ENCODE measurements at regions of chr15 and their contacts with region 1.

Region 1: DNA sequence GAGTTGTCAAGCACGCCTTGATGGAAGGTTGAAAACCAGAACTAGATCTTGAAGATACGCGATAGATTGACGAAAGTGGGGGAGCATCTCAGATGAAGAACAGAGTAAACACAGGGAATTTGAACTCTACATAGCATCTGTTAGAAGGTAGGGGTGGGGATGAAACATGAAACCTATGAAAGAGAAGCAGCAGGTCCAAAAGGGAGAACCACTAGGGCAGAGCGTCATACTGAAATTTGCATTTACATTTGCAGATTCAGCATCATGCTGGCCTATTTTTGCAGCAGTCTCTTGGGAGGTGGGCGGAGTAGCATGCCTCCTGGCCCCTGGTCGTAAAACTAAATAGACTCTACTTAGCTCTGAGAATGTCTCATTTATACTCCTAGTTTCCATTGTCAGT is 46.1 kb upstream of the RASGRP1 start:
- DNase-seq: peak; percentile 84
- ATAC-seq: peak; percentile 64
- H3K4me3 Mint-ChIP-seq: peak overlapping the region; percentile 5
- H3K27ac Mint-ChIP-seq: peak overlapping the region; percentile 89
- H3K4me1 Mint-ChIP-seq: peaks cover 73% of the 10 kb centered on the region
- H3K27me3 Mint-ChIP-seq: no peaks in the 10 kb centered on the region
- CTCF ChIP-seq: no peak

Region 2: GRCh38 chr15:38554354-38554753 is 56.4 kb before region 1 on chr15:
- CTCF ChIA-PET with region 1: interaction called, 4 read pairs
- POLR2A ChIA-PET with region 1: interaction called, 90 read pairs
- intact Hi-C with region 1: no loop called
- DNase-seq: peak; percentile 67
- ATAC-seq: peak; percentile 73
- H3K4me3 Mint-ChIP-seq: peak overlapping the region; percentile 54
- H3K27ac Mint-ChIP-seq: peak overlapping the region; percentile 96
- H3K4me1 Mint-ChIP-seq: peaks cover 88% of the 10 kb centered on the region
- H3K27me3 Mint-ChIP-seq: no peaks in the 10 kb centered on the region
- CTCF ChIP-seq: no peak

Region 3: DNA sequence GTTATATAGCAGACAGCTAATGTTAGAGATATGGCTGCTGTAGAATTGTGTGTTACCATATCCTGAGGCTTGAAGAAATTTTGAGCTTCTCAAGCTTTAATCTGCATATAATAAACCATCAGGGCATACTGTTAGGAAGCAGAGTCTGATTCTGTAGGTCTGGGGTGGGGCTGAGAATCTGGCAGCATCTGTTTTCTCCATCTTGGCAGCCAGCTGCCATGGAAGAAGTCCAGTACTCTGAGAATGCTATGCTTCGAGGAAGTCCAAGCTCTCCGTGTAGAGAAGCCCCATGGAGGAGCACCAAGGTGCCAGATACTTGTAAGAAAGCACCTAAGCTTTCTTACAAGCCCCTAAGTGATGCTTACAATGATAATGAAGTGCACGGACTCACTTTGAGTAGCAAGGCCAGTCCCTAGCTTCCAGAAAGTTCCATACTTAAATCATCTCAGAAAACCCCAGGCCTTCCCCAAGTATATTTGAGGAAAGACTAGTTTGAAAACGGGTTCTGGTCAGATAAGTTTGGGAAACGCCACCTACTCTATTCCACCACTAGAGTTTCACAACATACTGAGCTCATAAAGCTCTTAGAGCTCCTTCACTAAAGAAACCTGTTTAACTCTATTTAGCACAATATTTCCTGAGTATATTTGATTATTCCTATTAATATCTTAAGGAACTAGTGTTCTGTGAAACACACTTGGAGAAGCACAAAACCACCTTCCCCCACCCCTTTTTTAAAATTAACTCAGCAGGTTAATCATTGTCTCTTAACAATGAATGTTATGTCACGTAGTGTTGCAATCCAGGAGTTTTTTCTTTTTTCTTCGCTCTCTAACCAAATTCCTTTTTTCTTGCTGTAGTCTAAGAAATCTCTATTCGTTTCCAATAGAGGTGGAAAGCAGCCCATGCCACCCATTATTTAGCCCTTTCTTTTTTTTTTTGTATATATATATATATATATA is 13.8 kb after region 1 on chr15:
- CTCF ChIA-PET with region 1: interaction called, 16 read pairs
- POLR2A ChIA-PET with region 1: interaction called, 10 read pairs
- intact Hi-C with region 1: no loop called
- DNase-seq: no peak
- ATAC-seq: no peak
- H3K4me3 Mint-ChIP-seq: no peak overlapping the region
- H3K27ac Mint-ChIP-seq: no peak overlapping the region
- H3K4me1 Mint-ChIP-seq: peaks cover 33% of the 10 kb centered on the region
- H3K27me3 Mint-ChIP-seq: no peaks in the 10 kb centered on the region
- CTCF ChIP-seq: no peak

Region 4: GRCh38 chr15:38631126-38632075 is 20.7 kb after region 1 on chr15:
- CTCF ChIA-PET with region 1: interaction called, 16 read pairs
- POLR2A ChIA-PET with region 1: interaction called, 10 read pairs
- intact Hi-C with region 1: no loop called
- DNase-seq: peak; percentile 54
- ATAC-seq: peak; percentile 68
- H3K4me3 Mint-ChIP-seq: peak overlapping the region; percentile 33
- H3K27ac Mint-ChIP-seq: peak overlapping the region; percentile 93
- H3K4me1 Mint-ChIP-seq: peaks cover 56% of the 10 kb centered on the region
- H3K27me3 Mint-ChIP-seq: no peaks in the 10 kb centered on the region
- CTCF ChIP-seq: no peak

Region 5: DNA sequence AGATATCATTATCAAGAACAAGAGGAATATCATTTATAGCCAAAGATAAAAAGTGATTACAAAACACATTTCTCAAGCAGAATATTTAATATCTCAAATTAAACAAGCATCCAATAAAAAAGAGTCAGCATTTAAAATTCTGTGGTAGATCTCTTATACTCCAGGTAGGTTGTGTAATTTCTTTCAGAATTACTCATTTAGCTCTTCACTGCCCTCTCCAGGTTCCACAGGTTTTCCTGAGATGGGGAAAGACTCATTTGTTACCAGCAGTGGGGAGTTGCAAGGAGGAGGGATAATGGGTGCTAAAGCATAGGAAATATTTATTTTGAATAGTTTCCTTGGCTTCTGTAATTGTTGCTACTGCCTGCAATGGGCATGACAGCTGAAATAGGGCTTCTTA is 36.9 kb after region 1 on chr15:
- CTCF ChIA-PET with region 1: interaction called, 24 read pairs
- POLR2A ChIA-PET with region 1: interaction called, 12 read pairs
- intact Hi-C with region 1: no loop called
- DNase-seq: no peak
- ATAC-seq: no peak
- H3K4me3 Mint-ChIP-seq: no peak overlapping the region
- H3K27ac Mint-ChIP-seq: no peak overlapping the region
- H3K4me1 Mint-ChIP-seq: peaks cover 71% of the 10 kb centered on the region
- H3K27me3 Mint-ChIP-seq: no peaks in the 10 kb centered on the region
- CTCF ChIP-seq: no peak

Region 6: DNA sequence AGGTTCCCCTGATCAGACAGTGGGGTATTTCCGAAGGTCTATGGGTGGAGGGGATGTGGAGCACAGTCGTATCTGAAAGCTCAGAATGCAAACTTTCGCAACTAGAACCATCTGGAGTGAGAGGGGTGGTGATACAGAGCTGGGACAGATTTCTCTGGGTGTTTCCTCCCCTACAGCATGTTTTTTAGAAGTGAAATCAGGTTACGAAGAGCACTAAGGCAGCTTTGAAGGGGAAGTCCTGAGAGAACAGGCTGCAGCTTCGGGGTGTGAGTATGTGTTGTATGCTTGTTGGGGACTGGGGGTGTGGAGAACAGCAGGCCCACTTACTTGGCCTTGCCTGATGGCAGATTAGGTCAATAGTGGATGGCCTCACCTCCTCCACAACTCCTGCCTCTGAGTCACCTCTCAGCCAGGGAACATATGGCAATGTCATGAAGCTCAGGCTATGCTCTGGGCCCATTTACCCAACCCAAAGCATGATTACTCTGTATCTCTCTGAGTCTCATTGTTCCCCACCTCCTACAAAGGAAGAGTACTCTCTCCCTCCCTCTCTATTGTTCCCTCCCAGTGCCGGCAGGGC is 61.0 kb after region 1 on chr15:
- CTCF ChIA-PET with region 1: interaction called, 5 read pairs
- POLR2A ChIA-PET with region 1: interaction called, 6 read pairs
- intact Hi-C with region 1: loop called (anchors 5 kb)
- DNase-seq: peak; percentile 72
- ATAC-seq: peak; percentile 61
- H3K4me3 Mint-ChIP-seq: peak overlapping the region; percentile 62
- H3K27ac Mint-ChIP-seq: peak overlapping the region; percentile 95
- H3K4me1 Mint-ChIP-seq: peaks cover 75% of the 10 kb centered on the region
- H3K27me3 Mint-ChIP-seq: no peaks in the 10 kb centered on the region
- CTCF ChIP-seq: no peak

Region 7: DNA sequence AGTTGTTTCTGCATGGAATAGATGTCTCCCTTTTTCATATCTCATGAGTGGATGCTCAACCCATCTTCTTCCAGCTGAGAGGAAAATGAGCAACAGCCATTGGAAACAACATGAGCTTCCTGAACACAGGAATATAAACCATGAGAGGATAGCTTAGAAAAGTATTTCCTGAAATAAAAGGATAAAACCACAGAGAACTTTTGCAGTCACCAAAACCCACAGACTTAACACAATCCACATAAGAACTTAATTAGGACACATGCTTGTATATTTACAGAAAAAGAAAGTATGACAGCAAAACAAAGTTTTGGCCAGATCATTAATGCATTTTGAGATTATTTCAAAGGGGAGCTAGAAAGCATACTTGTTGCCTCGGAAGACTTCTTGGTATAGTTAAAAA is 134.4 kb after region 1 on chr15:
- CTCF ChIA-PET with region 1: no interaction called
- POLR2A ChIA-PET with region 1: no interaction called
- intact Hi-C with region 1: no loop called
- DNase-seq: no peak
- ATAC-seq: no peak
- H3K4me3 Mint-ChIP-seq: no peak overlapping the region
- H3K27ac Mint-ChIP-seq: no peak overlapping the region
- H3K4me1 Mint-ChIP-seq: no peaks in the 10 kb centered on the region
- H3K27me3 Mint-ChIP-seq: peaks cover 3% of the 10 kb centered on the region
- CTCF ChIP-seq: no peak

Measured in activated CD8-positive, alpha-beta T cell treated with anti-CD3 and anti-CD28 coated beads for 36 hours (primary cell).